GM12878 (cell line): ENCODE measurements at regions of chr5 and their contacts with region 1.

Region 1: GRCh38 chr5:132386644-132387286 is 17.3 kb downstream of the SLC22A5 start:
- DNase-seq: peak; percentile 70
- ATAC-seq: peak; percentile 96
- H3K4me3 ChIP-seq: no peak overlapping the region
- H3K27ac ChIP-seq: no peak overlapping the region
- H3K4me1 ChIP-seq: peaks cover 20% of the 10 kb centered on the region
- H3K27me3 ChIP-seq: no peaks in the 10 kb centered on the region
- CTCF ChIP-seq: peak; percentile 86 to 97 (median 93)
- EP300 ChIP-seq: no peak
- POLR2A ChIP-seq: no peak
- RAD21 ChIP-seq: peak; percentile 91

Region 2: GRCh38 chr5:132064738-132065331 is 321.9 kb before region 1 on chr5:
- CTCF ChIA-PET with region 1: interaction called, 4 read pairs
- POLR2A ChIA-PET with region 1: no interaction called
- RAD21 ChIA-PET with region 1: interaction called, 3 read pairs
- SMC1A ChIA-PET with region 1: no interaction called
- in situ Hi-C with region 1: no loop called
- intact Hi-C with region 1: loop called (anchors 2 kb)
- DNase-seq: peak; percentile 45
- ATAC-seq: peak; percentile 91
- H3K4me3 ChIP-seq: no peak overlapping the region
- H3K27ac ChIP-seq: no peak overlapping the region
- H3K4me1 ChIP-seq: no peaks in the 10 kb centered on the region; the same call in 1 of the 2 replicates
- H3K27me3 ChIP-seq: no peaks in the 10 kb centered on the region; a peak in 1 of 4 replicates
- CTCF ChIP-seq: peak; percentile 93 to 97 (median 97)
- EP300 ChIP-seq: no peak
- POLR2A ChIP-seq: no peak
- RAD21 ChIP-seq: peak; percentile 90

Region 3: DNA sequence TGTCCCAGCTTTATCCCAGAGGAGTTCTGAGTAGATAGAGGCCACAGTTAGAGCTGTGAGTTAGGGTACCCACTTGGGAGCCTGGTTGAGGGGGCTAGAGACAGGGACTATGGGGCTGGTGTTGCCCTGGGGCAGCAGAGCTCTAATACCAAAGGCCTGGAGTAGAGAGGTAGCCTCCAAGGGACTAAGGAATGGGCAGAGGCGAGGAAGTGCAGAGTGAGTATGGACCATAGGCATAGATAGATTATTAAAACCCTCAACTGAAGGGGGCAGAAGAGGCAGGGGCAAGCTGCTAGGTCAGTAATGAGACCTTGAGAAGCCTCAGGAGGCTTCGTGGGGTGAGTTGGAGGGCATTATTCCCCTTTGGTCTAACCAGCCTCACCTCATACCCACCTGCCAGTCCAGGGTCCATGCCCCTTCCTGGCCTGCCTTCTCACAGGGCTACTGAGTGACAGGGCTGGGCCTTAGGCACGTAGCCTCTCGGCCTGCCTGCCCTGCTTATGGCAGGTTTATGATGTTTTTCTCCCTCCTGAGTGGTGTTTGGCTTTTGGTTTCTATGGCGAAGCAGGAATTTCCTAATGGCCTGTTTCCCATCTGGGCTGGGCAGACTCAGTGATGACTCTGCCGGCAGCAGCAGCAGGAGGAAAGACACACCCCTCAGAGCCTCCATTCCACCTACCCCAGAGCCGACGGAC is 121.3 kb before region 1 on chr5:
- CTCF ChIA-PET with region 1: no interaction called
- POLR2A ChIA-PET with region 1: no interaction called
- RAD21 ChIA-PET with region 1: no interaction called
- SMC1A ChIA-PET with region 1: no interaction called
- in situ Hi-C with region 1: no loop called
- intact Hi-C with region 1: no loop called
- DNase-seq: no peak
- ATAC-seq: no peak
- H3K4me3 ChIP-seq: no peak overlapping the region
- H3K27ac ChIP-seq: no peak overlapping the region
- H3K4me1 ChIP-seq: peaks cover 33% of the 10 kb centered on the region
- H3K27me3 ChIP-seq: no peaks in the 10 kb centered on the region
- CTCF ChIP-seq: no peak
- EP300 ChIP-seq: no peak
- POLR2A ChIP-seq: no peak
- RAD21 ChIP-seq: no peak

Region 4: GRCh38 chr5:132369474-132370180 is 17.1 kb before region 1 on chr5 and contains the start of gene SLC22A5:
- CTCF ChIA-PET with region 1: interaction called, 8 read pairs
- POLR2A ChIA-PET with region 1: no interaction called
- RAD21 ChIA-PET with region 1: interaction called, 10 read pairs
- SMC1A ChIA-PET with region 1: interaction called, 10 read pairs
- in situ Hi-C with region 1: no loop called
- intact Hi-C with region 1: no loop called
- DNase-seq: no peak
- ATAC-seq: peak; percentile 97
- H3K4me3 ChIP-seq: peak within 1 kb of the TSS; percentile 84
- H3K27ac ChIP-seq: peak within 1 kb of the TSS; percentile 31; the same call in 1 of the 2 replicates
- H3K4me1 ChIP-seq: peaks cover 8% of the 10 kb centered on the region
- H3K27me3 ChIP-seq: no peaks in the 10 kb centered on the region; a peak in 2 of 4 replicates
- CTCF ChIP-seq: no peak
- EP300 ChIP-seq: no peak
- POLR2A ChIP-seq: peak; percentile 71
- RAD21 ChIP-seq: no peak
- polyA plus RNA-seq, gene SLC22A5: 1.1 to 1.9 TPM

Region 5: DNA sequence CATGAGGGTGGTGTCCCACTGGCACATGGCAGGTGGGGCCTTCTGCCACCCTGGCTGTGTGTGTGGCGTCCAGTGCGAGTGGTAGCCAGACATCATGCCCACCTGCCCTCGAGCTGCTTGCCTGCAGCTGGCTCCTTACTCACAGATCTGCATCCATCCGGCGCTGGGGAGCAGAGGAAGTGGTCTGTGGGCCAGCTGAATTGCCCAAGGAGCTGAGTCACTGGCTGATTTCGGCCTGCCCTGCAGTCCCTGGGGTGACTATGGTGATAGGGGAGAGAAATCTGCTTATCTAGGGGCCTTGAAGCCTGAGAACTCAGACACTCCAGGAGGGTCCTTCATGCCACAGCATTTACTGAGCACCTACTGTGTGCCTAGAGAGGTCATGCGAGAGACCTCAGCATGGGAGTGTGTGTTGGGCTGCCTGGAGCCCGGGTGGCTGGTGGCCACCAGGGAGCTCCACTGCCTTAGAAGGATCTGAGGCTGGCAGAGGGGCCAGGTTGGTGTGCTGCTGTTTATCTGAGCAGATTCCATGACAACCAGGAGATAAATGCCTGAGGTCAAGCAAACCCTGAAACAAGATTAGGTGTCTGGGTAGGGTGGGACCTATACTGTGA is 39.9 kb after region 1 on chr5:
- CTCF ChIA-PET with region 1: interaction called, 6 read pairs
- POLR2A ChIA-PET with region 1: no interaction called
- RAD21 ChIA-PET with region 1: interaction called, 7 read pairs
- SMC1A ChIA-PET with region 1: interaction called, 18 read pairs
- in situ Hi-C with region 1: no loop called
- intact Hi-C with region 1: no loop called
- DNase-seq: no peak
- ATAC-seq: peak; percentile 62
- H3K4me3 ChIP-seq: peak overlapping the region; percentile 49
- H3K27ac ChIP-seq: peak overlapping the region; percentile 94
- H3K4me1 ChIP-seq: peaks cover 90% of the 10 kb centered on the region
- H3K27me3 ChIP-seq: no peaks in the 10 kb centered on the region
- CTCF ChIP-seq: peak; percentile 47 to 56 (median 52)
- EP300 ChIP-seq: peak; percentile 17 to 67; a peak in 3 of 4 replicates
- POLR2A ChIP-seq: peak; percentile 88
- RAD21 ChIP-seq: peak; percentile 42; the same call in 1 of the 2 replicates

Region 6: GRCh38 chr5:132495667-132496190 is 109.0 kb after region 1 on chr5:
- CTCF ChIA-PET with region 1: interaction called, 481 read pairs
- POLR2A ChIA-PET with region 1: interaction called, 16 read pairs
- RAD21 ChIA-PET with region 1: interaction called, 279 read pairs
- SMC1A ChIA-PET with region 1: interaction called, 340 read pairs
- in situ Hi-C with region 1: loop called (anchors 10 kb)
- intact Hi-C with region 1: no loop called
- DNase-seq: no peak
- ATAC-seq: peak; percentile 69
- H3K4me3 ChIP-seq: peak overlapping the region; percentile 85
- H3K27ac ChIP-seq: peak overlapping the region; percentile 63
- H3K4me1 ChIP-seq: peaks cover 49% of the 10 kb centered on the region
- H3K27me3 ChIP-seq: no peaks in the 10 kb centered on the region
- CTCF ChIP-seq: 0 out of 6 replicates have a peak, but pooled peaks of 1 of the 3 experiments have one; percentile 7
- EP300 ChIP-seq: peak in 1 of 2 experiments; percentile 38; a peak in 2 of 4 replicates
- POLR2A ChIP-seq: peak; percentile 48; the same call in 1 of the 2 replicates
- RAD21 ChIP-seq: no peak

Region 7: DNA sequence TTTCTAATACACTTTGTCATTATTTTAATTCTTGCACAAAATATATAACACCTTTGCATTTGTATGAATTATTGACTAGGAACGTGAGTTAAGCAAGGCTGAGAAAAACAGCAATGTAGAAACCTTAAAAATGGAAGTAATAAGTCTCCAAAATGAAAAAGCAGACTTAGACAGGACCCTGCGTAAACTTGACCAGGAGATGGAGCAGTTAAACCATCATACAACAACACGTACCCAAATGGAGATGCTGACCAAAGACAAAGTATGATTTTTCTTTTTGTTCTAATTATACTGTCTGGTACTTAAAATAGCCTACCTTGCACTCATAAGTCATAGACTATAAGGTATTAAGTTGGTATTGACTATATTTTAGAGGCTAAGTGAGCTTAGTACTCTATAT is 204.4 kb after region 1 on chr5:
- CTCF ChIA-PET with region 1: interaction called, 4 read pairs
- POLR2A ChIA-PET with region 1: no interaction called
- RAD21 ChIA-PET with region 1: no interaction called
- SMC1A ChIA-PET with region 1: no interaction called
- in situ Hi-C with region 1: no loop called
- intact Hi-C with region 1: loop called (anchors 10 kb)
- DNase-seq: no peak
- ATAC-seq: peak; percentile 54; the same call in 2 of the 3 replicates
- H3K4me3 ChIP-seq: no peak overlapping the region
- H3K27ac ChIP-seq: no peak overlapping the region
- H3K4me1 ChIP-seq: no peaks in the 10 kb centered on the region
- H3K27me3 ChIP-seq: no peaks in the 10 kb centered on the region
- CTCF ChIP-seq: peak in 2 of 3 experiments; percentile 31 to 59; a peak in 3 of 6 replicates
- EP300 ChIP-seq: no peak
- POLR2A ChIP-seq: no peak
- RAD21 ChIP-seq: peak; percentile 69